Heart left ventricle (tissue), 16 donors: ENCODE measurements at regions of chr4 and their contacts with region 1.

Region 1: DNA sequence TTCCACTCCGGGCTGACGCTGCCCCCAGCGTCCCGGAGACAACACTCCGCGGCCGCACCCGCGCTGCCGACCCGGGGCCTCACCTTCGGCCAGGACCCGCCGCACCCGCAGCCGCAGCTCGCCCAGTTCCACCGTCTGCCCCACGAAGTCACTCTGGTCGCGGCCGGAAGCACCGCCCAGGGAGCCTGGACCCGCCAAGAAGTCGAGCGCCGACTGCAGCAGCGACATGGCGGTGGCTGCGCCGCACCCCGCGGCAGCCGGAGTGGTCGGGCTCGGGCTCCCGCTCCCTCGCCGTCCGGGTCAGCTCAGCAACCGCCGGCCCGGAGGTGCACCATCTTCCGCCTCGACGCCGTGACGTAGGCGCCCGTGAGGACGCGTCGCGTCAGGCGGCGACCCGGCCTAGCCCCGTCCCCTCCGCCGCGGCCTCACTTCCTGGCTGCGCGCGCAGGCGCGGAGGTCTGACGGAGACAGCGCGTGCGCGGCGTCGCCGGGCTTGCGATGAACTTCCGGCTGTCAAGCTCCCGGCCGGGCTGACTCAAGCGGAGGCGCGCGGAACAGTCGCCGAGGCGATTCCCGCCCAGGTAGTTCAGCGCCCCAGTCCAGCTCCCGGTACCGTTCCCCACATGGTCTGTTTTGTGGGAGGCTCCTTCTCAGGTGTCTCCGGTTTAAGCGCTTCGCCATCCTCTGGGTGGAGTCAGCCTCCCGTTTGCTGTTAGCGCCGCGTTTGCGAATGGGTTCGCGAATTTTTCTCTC is at the starts of genes GAK and TMEM175:
- DNase-seq: peak; percentile 95 to 99 (median 96)
- ATAC-seq: peak; percentile 99
- H3K4me3 ChIP-seq: peak within 1 kb of the TSS; percentile 75 to 100 (median 94)
- H3K27ac ChIP-seq: peak within 1 kb of the TSS; percentile 48 to 96 (median 88)
- H3K4me1 ChIP-seq: peaks cover 11 to 59% (median 35%) of the 10 kb centered on the region in 12 donors
- H3K27me3 ChIP-seq: no peaks in the 10 kb centered on the region
- CTCF ChIP-seq: peak in 2 of 12 donors; percentile 2 to 6
- POLR2A ChIP-seq: peak; percentile 63 to 89
- total RNA-seq, gene GAK: 22.8 to 55.1 (median 32.5) TPM
- total RNA-seq, gene TMEM175: 16.6 to 34.6 (median 20.1) TPM

Region 2: GRCh38 chr4:781493-782216 is 150.5 kb before region 1 on chr4:
- intact Hi-C with region 1: loop called in 2 of 10 experiments (anchors 5 to 10 kb)
- DNase-seq: peak; percentile 99 to 100 (median 99)
- ATAC-seq: peak; percentile 97 to 98 (median 98)
- H3K4me3 ChIP-seq: peak overlapping the region; percentile 74 to 100 (median 96)
- H3K27ac ChIP-seq: peak overlapping the region; percentile 87 to 98 (median 94)
- H3K4me1 ChIP-seq: peaks cover 3 to 66% (median 37%) of the 10 kb centered on the region in 12 donors
- H3K27me3 ChIP-seq: peaks cover 11 to 25% (median 18%) of the 10 kb centered on the region in 9 donors
- CTCF ChIP-seq: no peak
- POLR2A ChIP-seq: peak; percentile 93 to 98

Region 3: DNA sequence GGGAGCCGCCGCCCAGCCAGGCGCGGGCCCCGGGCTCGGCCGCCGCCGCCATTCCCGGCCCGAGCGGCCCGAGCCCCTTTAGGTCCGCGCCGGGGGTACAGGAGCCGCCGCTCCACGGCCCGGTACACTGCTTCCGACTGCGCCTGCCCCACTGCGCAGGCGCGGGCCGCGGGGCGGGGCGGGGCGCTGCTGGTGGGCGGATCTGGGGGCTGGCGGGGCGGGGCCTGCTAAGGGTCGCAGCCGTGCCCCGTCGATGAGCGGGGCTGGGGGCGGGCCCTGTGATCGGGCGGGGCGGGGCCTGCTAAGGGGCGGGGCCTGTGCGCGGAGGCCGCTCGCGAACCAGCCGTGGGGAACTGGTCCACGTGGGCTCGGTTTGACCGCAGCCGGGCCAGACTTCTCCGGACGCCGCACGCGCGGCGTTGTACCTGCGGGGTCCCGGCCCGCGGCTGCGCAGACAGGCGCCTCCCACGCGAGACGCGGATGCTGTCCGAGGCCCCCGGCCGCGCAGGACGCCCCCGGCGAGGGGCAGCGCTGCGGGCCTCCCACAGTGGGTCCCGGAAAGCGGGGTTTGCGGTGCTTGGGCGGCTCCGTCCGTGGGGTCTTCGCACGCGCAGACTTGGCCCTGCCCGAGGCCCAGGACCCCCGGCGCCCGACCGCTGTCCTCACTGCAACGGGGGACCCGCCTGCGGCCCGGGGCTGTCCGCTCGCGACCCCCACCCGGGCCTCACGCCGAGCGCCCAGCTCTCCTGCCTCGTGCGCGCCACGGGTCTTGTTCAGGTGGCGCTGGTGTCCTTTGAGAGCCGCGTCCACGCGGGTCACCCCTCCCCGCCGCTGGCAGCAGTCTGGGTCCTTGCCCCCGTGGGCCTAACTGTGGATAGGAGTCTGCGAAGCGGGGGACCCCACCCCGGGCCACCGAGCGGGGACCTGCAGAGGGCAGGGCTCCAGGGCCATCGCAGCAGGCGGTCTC is 41.6 kb after region 1 on chr4 and contains the start of gene DGKQ:
- intact Hi-C with region 1: loop called in 1 of 10 experiments (anchors 5 kb)
- DNase-seq: peak; percentile 87 to 96 (median 89)
- ATAC-seq: peak; percentile 90 to 98 (median 97)
- H3K4me3 ChIP-seq: peak within 1 kb of the TSS; percentile 55 to 98 (median 78)
- H3K27ac ChIP-seq: peak within 1 kb of the TSS in 4 of 12 donors; percentile 40 to 55 (median 48)
- H3K4me1 ChIP-seq: peaks cover 8 to 32% (median 19%) of the 10 kb centered on the region in 12 donors
- H3K27me3 ChIP-seq: peaks cover 0 to 1% (median 0%) of the 10 kb centered on the region in 9 donors
- CTCF ChIP-seq: no peak
- POLR2A ChIP-seq: no peak
- total RNA-seq, gene DGKQ: 3.2 to 7.3 (median 4.4) TPM

Region 4: DNA sequence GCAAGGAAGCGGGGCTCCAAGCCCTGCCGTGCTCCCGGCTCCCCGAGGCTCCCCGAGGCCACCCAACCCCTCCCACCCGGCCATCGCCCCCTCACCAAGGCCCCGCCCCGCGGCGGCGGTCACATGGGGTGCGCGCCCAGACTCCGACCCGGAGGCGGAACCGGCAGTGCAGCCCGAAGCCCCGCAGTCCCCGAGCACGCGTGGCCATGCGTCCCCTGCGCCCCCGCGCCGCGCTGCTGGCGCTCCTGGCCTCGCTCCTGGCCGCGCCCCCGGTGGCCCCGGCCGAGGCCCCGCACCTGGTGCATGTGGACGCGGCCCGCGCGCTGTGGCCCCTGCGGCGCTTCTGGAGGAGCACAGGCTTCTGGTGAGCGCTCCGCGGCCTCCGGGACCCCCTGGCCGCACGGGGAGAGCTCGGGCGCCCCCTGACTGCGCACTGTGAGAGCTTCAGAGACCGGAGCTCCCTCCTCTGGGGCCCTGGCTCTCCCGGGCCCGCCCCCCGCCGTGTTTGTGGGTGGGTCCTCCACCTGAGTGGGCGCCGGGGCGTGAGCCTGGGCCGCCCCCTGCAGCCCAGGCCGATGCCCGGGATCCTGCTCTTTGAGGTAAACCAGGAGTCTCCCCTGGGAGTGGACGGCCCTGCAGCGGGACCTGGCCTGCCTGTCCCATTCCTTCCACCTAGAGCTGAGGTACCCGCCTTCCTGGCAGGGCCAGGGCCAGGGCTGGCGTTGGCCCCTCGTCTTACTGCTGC is 54.9 kb after region 1 on chr4 and contains the start of gene IDUA:
- intact Hi-C with region 1: loop called in 2 of 10 experiments (anchors 2 to 5 kb)
- DNase-seq: peak; percentile 83 to 90 (median 85)
- ATAC-seq: peak; percentile 55 to 90 (median 86)
- H3K4me3 ChIP-seq: peak within 1 kb of the TSS; percentile 60 to 93 (median 73)
- H3K27ac ChIP-seq: peak within 1 kb of the TSS in 10 of 12 donors; percentile 33 to 76 (median 55)
- H3K4me1 ChIP-seq: peaks cover 0 to 34% (median 18%) of the 10 kb centered on the region in 12 donors
- H3K27me3 ChIP-seq: no peaks in the 10 kb centered on the region
- CTCF ChIP-seq: peak; percentile 15 to 59 (median 43)
- POLR2A ChIP-seq: peak in 1 of 2 donors; percentile 34
- total RNA-seq, gene IDUA: 5.0 to 17.4 (median 6.9) TPM

Region 5: GRCh38 chr4:1009542-1010394 is 77.6 kb after region 1 on chr4:
- intact Hi-C with region 1: loop called in 1 of 10 experiments (anchors 2 kb)
- DNase-seq: peak; percentile 72 to 91 (median 75)
- ATAC-seq: peak; percentile 54 to 78 (median 66)
- H3K4me3 ChIP-seq: peak overlapping the region; percentile 49 to 75 (median 65)
- H3K27ac ChIP-seq: peak overlapping the region in 7 of 12 donors; percentile 8 to 76 (median 58)
- H3K4me1 ChIP-seq: peaks cover 0 to 38% (median 23%) of the 10 kb centered on the region in 12 donors
- H3K27me3 ChIP-seq: peaks cover 0 to 41% (median 15%) of the 10 kb centered on the region in 9 donors
- CTCF ChIP-seq: peak in 6 of 12 donors; percentile 5 to 43 (median 16)
- POLR2A ChIP-seq: no peak